Astrocyte of the cerebellum (primary cell): ENCODE measurements at regions of chr11 and their contacts with region 1.

Region 1: GRCh38 chr11:132154781-132155180 is 784.4 kb downstream of the NTM start:
- DNase-seq: peak; percentile 26
- H3K4me3 ChIP-seq: no peak overlapping the region
- CTCF ChIP-seq: no peak

Region 2: DNA sequence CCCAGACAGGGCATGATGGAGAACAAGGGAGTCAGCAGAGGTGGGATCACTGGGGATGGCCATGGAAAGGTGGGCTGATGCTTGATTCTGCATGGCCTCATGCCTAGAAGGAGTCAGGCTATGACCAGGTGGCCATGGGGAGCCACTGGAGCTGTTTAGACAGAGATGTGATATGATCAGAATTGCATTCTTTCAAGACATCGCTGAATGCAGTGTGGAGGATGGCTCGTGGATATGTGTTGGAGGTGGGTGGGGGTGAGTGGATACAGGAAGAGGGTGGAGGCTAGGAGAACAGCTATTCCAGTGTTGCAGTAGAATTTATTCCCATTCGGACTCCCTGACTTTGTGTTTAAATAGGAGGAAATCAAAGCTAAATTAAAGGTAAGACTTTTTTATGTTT is 56.7 kb after region 1 on chr11:
- in situ Hi-C with region 1: loop called (anchors 5 kb)
- DNase-seq: no peak
- H3K4me3 ChIP-seq: no peak overlapping the region
- CTCF ChIP-seq: no peak